GM12878 (cell line): ENCODE measurements at regions of chrX and their contacts with region 1.

Region 1: GRCh38 chrX:47217642-47218279 is 720 bp upstream of the CDK16 start:
- DNase-seq: peak; percentile 99
- ATAC-seq: peak; percentile 90
- H3K4me3 ChIP-seq: peak overlapping the region; percentile 88; the same call in 1 of the 2 replicates
- H3K27ac ChIP-seq: peak overlapping the region; percentile 96
- H3K4me1 ChIP-seq: peaks cover 8% of the 10 kb centered on the region; the same call in 1 of the 2 replicates
- H3K27me3 ChIP-seq: no peaks in the 10 kb centered on the region
- CTCF ChIP-seq: no peak
- EP300 ChIP-seq: no peak
- POLR2A ChIP-seq: no peak; the same call in 1 of the 2 replicates
- RAD21 ChIP-seq: no peak

Region 2: DNA sequence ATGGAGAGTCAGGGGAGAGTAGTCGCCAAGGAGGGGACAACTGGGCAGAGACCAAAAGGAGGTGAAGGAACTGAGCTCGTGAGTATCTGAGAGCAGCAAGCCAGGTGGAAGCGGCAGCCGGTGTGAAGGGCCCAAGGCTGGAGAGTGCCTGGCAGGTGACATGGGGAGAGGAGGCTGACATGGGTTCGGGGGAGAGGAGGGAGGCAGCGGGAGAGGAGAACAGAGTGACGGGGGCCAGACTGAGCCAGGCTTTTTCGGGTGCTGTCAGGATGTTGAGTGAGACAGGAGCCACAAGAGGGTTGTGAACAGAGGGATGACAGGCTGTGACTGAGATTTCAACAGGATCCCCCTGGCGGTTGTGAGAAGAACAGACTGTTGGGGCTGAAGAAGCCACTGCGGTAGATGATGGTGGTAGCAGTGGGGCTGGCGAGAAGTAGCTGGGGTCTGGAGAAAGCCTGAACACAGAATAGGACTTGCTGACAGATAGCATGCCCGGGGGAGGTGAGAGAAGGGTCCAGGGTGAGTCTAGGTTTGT is 426.9 kb after region 1 on chrX:
- CTCF ChIA-PET with region 1: no interaction called
- POLR2A ChIA-PET with region 1: no interaction called
- RAD21 ChIA-PET with region 1: no interaction called
- SMC1A ChIA-PET with region 1: no interaction called
- in situ Hi-C with region 1: loop called (anchors 10 kb)
- intact Hi-C with region 1: no loop called
- DNase-seq: no peak
- ATAC-seq: peak; percentile 90
- H3K4me3 ChIP-seq: no peak overlapping the region
- H3K27ac ChIP-seq: no peak overlapping the region
- H3K4me1 ChIP-seq: no peaks in the 10 kb centered on the region; the same call in 1 of the 2 replicates
- H3K27me3 ChIP-seq: no peaks in the 10 kb centered on the region
- CTCF ChIP-seq: peak; percentile 39 to 59 (median 51); a peak in 4 of 6 replicates
- EP300 ChIP-seq: no peak
- POLR2A ChIP-seq: no peak
- RAD21 ChIP-seq: peak; percentile 19; the same call in 1 of the 2 replicates

Region 3: DNA sequence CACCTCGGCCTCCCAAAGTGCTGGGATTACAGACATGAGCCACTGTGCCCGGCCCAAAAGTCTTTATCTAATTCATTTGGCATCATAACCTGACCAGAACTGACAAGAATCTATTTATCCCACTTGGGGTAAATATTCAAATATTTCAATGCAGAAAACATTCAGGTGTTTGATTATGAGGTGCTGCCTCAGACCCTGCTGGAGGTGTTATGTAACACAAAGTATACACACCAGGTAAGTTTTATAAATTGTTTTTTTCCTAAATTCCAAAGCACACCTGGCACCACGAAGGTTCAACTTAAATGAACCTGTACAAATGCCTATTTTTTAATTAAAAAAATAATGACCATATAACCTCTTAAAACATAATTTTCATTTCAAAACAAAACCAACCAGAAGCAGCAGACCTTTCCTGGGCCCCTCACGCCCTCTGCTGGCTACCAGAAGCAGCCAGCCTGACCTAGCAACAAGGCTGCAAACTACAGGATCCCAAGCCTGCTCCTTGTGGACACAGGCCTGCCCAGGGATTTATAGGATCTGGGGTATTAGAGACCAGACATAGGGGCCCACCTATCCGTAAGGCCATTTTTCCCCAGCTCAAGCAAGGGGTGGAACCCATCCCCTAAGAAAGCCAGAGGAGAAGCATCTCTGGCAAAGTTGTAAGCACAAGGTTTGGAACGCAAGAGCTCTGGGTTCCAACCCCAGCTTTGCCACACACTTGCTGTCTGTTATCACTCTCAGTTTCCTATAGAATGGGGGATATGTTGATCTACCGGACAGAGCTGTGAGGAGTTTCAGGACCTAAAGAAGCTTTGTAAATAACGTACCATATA is 1728.0 kb after region 1 on chrX:
- CTCF ChIA-PET with region 1: no interaction called
- POLR2A ChIA-PET with region 1: no interaction called
- RAD21 ChIA-PET with region 1: no interaction called
- SMC1A ChIA-PET with region 1: no interaction called
- in situ Hi-C with region 1: loop called (anchors 25 kb)
- intact Hi-C with region 1: no loop called
- DNase-seq: no peak
- ATAC-seq: peak; percentile 82
- H3K4me3 ChIP-seq: no peak overlapping the region
- H3K27ac ChIP-seq: no peak overlapping the region
- H3K4me1 ChIP-seq: peaks cover 13% of the 10 kb centered on the region
- H3K27me3 ChIP-seq: no peaks in the 10 kb centered on the region
- CTCF ChIP-seq: peak; percentile 88 to 93 (median 91)
- EP300 ChIP-seq: no peak
- POLR2A ChIP-seq: no peak
- RAD21 ChIP-seq: peak; percentile 94